MCF 10A (cell line): ENCODE measurements at regions of chr3 and their contacts with region 1.

Region 1: DNA sequence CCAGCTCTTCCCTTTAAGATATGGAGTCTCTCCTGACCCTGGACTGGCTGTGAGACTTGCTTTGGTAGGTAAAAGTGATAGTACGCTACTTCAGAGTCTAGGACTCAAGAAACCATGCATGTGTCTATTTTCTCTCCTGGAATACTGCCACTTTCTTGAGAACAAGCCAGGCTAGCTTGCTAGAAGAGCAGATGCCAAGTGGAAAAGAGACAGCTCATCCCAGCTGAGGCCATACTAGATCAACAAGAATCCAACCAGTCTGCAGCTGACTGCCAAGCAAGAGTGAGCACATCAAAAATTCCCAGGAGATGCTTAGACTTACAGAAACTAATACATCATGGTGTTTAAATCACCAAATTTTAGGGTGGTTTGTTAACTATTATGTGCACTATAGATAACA is 208.3 kb upstream of the RBMS3 start:
- DNase-seq: no peak
- H3K4me3 Mint-ChIP-seq: no peak overlapping the region
- H3K27ac Mint-ChIP-seq: no peak overlapping the region
- H3K4me1 Mint-ChIP-seq: peaks cover 14% of the 10 kb centered on the region
- H3K27me3 Mint-ChIP-seq: no peaks in the 10 kb centered on the region
- CTCF ChIP-seq: no peak

Region 2: GRCh38 chr3:28867836-28868235 is 204.8 kb before region 1 on chr3:
- CTCF ChIA-PET with region 1: no interaction called
- POLR2A ChIA-PET with region 1: no interaction called
- intact Hi-C with region 1: no loop called
- DNase-seq: no peak
- H3K4me3 Mint-ChIP-seq: no peak overlapping the region
- H3K27ac Mint-ChIP-seq: no peak overlapping the region
- H3K4me1 Mint-ChIP-seq: peaks cover 5% of the 10 kb centered on the region
- H3K27me3 Mint-ChIP-seq: no peaks in the 10 kb centered on the region
- CTCF ChIP-seq: no peak

Region 3: DNA sequence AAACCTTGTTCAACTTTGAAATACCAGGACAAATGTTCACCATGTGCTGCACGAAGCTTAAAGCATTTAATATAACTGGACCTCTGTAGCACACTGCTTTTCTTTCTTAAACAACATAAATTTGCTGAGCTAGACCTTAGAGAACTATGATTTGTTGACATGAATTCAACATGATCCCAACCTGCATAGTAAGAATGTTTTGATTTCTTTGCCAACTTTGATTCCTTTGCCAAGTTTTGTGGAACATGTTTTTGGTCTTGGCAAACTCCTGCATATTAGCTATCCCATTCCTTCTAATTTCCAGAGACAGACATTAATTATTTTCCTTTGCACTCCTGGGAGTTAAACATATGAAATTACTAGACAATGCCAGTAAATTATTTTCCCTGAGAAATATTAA is 11.1 kb after region 1 on chr3:
- CTCF ChIA-PET with region 1: interaction called, 3 read pairs
- POLR2A ChIA-PET with region 1: interaction called, 22 read pairs
- intact Hi-C with region 1: no loop called
- DNase-seq: peak; percentile 16
- H3K4me3 Mint-ChIP-seq: no peak overlapping the region
- H3K27ac Mint-ChIP-seq: peak overlapping the region; percentile 57
- H3K4me1 Mint-ChIP-seq: peaks cover 15% of the 10 kb centered on the region
- H3K27me3 Mint-ChIP-seq: no peaks in the 10 kb centered on the region
- CTCF ChIP-seq: no peak

Region 4: GRCh38 chr3:29346828-29347227 is 274.2 kb after region 1 on chr3:
- CTCF ChIA-PET with region 1: no interaction called
- POLR2A ChIA-PET with region 1: no interaction called
- intact Hi-C with region 1: no loop called
- DNase-seq: no peak
- H3K4me3 Mint-ChIP-seq: no peak overlapping the region
- H3K27ac Mint-ChIP-seq: no peak overlapping the region
- H3K4me1 Mint-ChIP-seq: peaks cover 5% of the 10 kb centered on the region
- H3K27me3 Mint-ChIP-seq: no peaks in the 10 kb centered on the region
- CTCF ChIP-seq: no peak

Region 5: GRCh38 chr3:30188713-30189112 is 1116.1 kb after region 1 on chr3:
- CTCF ChIA-PET with region 1: no interaction called
- POLR2A ChIA-PET with region 1: no interaction called
- intact Hi-C with region 1: no loop called
- DNase-seq: peak; percentile 91
- H3K4me3 Mint-ChIP-seq: no peak overlapping the region
- H3K27ac Mint-ChIP-seq: no peak overlapping the region
- H3K4me1 Mint-ChIP-seq: peaks cover 8% of the 10 kb centered on the region
- H3K27me3 Mint-ChIP-seq: no peaks in the 10 kb centered on the region
- CTCF ChIP-seq: no peak